Activated naive CD4-positive, alpha-beta T cell treated with anti-CD3 and anti-CD28 coated beads for 36 hours (primary cell): ENCODE measurements at regions of chr4 and their contacts with region 1.

Region 1: DNA sequence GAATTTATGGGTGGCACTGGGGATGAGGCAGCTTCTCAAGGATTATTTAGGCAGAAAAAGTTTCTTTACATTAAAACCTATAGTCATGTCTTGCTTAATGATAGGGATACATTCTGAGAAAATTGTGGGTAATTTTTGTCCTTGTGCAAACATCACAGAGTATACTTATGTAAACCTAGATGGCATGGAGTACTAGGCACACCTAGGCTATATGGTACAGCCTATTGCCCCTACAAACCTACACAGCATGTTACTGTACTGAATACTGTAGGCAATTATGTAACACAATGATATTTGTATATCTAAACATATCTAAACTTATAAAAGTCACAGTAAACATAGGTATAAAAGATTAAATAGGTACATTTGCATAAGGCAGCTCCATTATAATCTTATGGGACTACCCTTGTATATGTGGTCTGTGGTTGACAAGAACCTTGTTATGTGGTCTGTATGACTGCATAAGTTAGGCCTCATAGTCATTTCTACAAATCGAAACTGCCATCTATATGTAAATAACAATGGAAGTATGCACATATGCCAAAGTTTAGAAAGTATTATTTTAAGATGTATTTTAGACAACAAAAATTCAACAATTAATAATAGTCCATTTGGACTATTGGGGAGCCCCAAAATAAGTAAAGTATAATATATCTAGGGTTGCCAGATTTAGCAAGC is 87.3 kb downstream of the CFAP299 start:
- DNase-seq: no peak
- H3K4me3 Mint-ChIP-seq: no peak overlapping the region
- H3K27ac Mint-ChIP-seq: no peak overlapping the region
- H3K4me1 Mint-ChIP-seq: peaks cover 3% of the 10 kb centered on the region
- H3K27me3 Mint-ChIP-seq: no peaks in the 10 kb centered on the region

Region 2: DNA sequence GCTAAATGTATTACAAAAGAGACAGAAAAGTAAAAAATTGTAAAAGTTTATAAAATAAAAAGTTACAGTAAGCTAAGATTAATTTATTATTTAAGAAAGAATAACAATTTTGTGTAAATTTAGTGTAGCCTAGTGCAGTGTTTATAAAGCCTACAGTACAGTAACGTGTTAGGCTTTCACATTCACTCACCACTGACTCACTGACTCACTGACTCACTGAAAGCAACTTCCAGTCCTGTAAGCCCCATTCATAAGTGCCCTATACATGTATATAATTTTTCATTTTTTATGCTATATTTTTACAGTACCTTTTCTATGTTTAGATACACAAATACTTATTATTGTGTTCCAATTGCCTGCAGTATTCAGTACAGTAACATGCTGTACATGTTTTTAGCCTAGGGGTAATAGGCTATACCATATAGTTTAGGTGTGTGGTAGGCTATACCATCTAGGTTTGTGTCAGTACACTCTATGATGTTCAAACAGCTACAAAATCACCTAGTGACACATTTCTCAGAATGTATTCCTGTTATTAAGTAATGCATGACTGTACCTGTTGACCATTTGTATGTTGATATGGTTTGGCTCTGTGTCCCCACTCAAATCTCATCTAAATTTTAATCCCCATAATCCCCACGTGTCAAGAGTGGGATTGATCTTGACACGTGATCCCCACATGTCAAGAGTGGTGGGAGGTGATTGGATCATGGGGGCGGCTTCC is 29.5 kb before region 1 on chr4:
- CTCF ChIA-PET with region 1: no interaction called
- intact Hi-C with region 1: loop called (anchors 1 kb)
- DNase-seq: peak; percentile 55
- H3K4me3 Mint-ChIP-seq: no peak overlapping the region
- H3K27ac Mint-ChIP-seq: peak overlapping the region; percentile 72
- H3K4me1 Mint-ChIP-seq: peaks cover 8% of the 10 kb centered on the region
- H3K27me3 Mint-ChIP-seq: no peaks in the 10 kb centered on the region

Region 3: GRCh38 chr4:80446664-80447063 is 23.8 kb after region 1 on chr4:
- CTCF ChIA-PET with region 1: no interaction called
- intact Hi-C with region 1: loop called (anchors 2 kb)
- DNase-seq: no peak
- H3K4me3 Mint-ChIP-seq: no peak overlapping the region
- H3K27ac Mint-ChIP-seq: no peak overlapping the region
- H3K4me1 Mint-ChIP-seq: no peaks in the 10 kb centered on the region
- H3K27me3 Mint-ChIP-seq: no peaks in the 10 kb centered on the region

Region 4: GRCh38 chr4:80484712-80485111 is 61.8 kb after region 1 on chr4:
- CTCF ChIA-PET with region 1: no interaction called
- intact Hi-C with region 1: loop called (anchors 5 kb)
- DNase-seq: no peak
- H3K4me3 Mint-ChIP-seq: no peak overlapping the region
- H3K27ac Mint-ChIP-seq: no peak overlapping the region
- H3K4me1 Mint-ChIP-seq: peaks cover 4% of the 10 kb centered on the region
- H3K27me3 Mint-ChIP-seq: no peaks in the 10 kb centered on the region